Activated CD8-positive, alpha-beta T cell treated with anti-CD3 and anti-CD28 coated beads for 36 hours (primary cell): ENCODE measurements at regions of chr11 and their contacts with region 1.

Region 1: GRCh38 chr11:118198370-118198769 is 21.9 kb upstream of the SCN2B start:
- DNase-seq: peak; percentile 93
- ATAC-seq: peak; percentile 14
- H3K4me3 Mint-ChIP-seq: no peak overlapping the region
- H3K27ac Mint-ChIP-seq: no peak overlapping the region
- H3K4me1 Mint-ChIP-seq: peaks cover 40% of the 10 kb centered on the region
- H3K27me3 Mint-ChIP-seq: no peaks in the 10 kb centered on the region
- CTCF ChIP-seq: peak; percentile 92

Region 2: DNA sequence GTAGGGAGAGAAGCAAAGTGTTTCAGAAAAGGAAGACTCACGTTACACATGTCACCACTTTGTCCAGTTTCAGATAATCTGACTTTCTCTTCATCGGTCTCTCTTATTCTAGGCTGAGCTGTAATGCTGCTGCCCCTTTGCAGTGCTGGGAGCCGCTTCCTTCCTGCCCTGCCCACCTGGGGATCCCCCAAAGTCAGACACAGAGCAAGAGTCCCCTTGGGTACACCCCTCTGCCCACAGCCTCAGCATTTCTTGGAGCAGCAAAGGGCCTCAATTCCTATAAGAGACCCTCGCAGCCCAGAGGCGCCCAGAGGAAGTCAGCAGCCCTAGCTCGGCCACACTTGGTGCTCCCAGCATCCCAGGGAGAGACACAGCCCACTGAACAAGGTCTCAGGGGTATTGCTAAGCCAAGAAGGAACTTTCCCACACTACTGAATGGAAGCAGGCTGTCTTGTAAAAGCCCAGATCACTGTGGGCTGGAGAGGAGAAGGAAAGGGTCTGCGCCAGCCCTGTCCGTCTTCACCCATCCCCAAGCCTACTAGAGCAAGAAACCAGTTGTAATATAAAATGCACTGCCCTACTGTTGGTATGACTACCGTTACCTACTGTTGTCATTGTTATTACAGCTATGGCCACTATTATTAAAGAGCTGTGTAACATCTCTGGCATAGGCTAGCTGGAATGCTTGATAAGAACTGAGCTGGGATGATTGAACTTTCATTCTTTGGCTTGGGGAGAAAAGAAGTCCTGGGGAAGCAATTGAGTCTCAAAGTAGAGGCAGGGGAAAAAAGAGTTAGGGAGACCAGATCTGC is 80.4 kb before region 1 on chr11:
- CTCF ChIA-PET with region 1: no interaction called
- POLR2A ChIA-PET with region 1: no interaction called
- intact Hi-C with region 1: no loop called
- DNase-seq: peak; percentile 77
- ATAC-seq: peak; percentile 99
- H3K4me3 Mint-ChIP-seq: peak overlapping the region; percentile 58
- H3K27ac Mint-ChIP-seq: peak overlapping the region; percentile 77
- H3K4me1 Mint-ChIP-seq: peaks cover 34% of the 10 kb centered on the region
- H3K27me3 Mint-ChIP-seq: no peaks in the 10 kb centered on the region
- CTCF ChIP-seq: no peak

Region 3: DNA sequence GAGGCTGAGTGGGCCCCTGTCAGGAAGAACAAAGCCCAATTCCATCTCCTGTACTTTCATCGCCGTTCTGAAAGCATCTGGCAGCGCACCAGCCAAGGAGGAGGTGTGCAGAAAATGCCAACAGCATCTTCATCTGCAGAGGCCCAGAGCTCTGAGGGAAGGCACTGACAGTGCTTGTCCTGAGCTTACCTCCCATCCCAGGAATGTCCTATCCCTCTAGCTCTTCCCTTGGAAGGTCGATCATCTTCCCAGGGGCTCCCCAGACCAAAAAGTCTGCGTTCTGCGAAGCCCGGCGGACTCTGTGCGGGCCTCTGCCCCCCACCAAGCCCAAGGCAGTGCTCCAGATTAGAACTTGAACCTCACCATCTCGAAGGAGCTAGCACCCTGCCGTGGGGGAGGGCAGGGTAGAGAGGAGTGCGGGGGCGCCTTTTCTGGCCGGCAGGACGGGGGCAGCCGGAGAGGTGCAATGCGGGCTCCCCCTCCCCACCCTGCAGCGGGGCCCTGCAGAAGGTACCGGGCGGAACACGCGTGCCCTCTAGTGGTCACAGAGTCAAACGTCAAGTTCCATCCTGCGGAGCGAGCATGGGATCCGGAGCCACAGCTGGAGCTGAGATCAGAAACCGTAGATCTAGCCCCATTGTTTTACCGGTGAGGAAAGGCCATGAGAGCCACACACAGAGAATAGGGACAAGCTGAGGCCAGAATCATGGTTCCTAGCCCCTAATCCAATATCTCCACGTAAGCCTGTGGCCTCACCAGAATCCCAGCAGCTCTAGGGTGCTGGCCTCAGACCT is 26.9 kb before region 1 on chr11:
- CTCF ChIA-PET with region 1: interaction called, 17 read pairs
- POLR2A ChIA-PET with region 1: interaction called, 3 read pairs
- intact Hi-C with region 1: no loop called
- DNase-seq: peak; percentile 84
- ATAC-seq: peak; percentile 98
- H3K4me3 Mint-ChIP-seq: no peak overlapping the region
- H3K27ac Mint-ChIP-seq: no peak overlapping the region
- H3K4me1 Mint-ChIP-seq: peaks cover 2% of the 10 kb centered on the region
- H3K27me3 Mint-ChIP-seq: peaks cover 5% of the 10 kb centered on the region
- CTCF ChIP-seq: peak; percentile 94

Region 4: DNA sequence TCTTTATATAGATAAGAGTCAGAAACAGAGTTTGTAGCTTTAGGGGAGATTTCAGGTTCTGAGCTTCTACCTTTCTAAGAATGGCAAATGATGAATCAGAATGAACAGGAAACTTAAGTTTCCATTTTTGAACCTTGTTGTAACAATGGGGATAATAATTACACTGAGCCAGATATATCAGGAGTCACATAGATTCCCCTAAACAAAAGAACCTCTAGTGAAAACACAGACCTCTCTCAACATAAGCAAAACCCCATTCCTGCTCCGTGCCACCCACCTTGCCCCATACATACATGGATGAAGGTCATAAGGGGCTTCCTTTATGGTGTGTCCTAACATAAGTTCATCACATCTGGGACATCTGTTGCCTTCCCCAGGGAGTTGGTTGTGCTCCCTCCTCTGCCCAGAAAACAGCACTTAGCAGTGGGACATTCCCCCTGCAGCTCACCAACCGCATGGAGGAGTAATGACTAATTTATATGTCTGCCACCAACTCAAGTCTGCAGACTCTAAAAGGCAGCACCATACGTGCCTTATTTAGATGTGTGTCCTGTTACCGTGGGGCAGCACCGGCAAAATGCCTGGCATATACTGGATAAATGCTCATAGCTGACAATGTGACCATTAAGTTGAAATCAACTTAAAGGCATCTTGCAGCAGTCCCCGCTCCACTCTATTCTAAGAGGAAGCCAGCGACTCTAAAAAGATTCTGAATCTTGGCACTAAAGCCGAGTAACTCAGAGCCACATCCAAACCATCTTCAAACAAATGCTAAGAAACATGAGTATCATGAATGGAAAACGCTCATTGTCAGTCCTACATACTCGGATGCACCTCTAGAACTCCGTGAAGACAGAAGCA is 18.5 kb after region 1 on chr11:
- CTCF ChIA-PET with region 1: interaction called, 100 read pairs
- POLR2A ChIA-PET with region 1: interaction called, 326 read pairs
- intact Hi-C with region 1: loop called (anchors 1 kb)
- DNase-seq: peak; percentile 79
- ATAC-seq: peak; percentile 70
- H3K4me3 Mint-ChIP-seq: peak overlapping the region; percentile 96
- H3K27ac Mint-ChIP-seq: peak overlapping the region; percentile 100
- H3K4me1 Mint-ChIP-seq: peaks cover 84% of the 10 kb centered on the region
- H3K27me3 Mint-ChIP-seq: no peaks in the 10 kb centered on the region
- CTCF ChIP-seq: no peak

Region 5: GRCh38 chr11:118247047-118247446 is 48.7 kb after region 1 on chr11:
- CTCF ChIA-PET with region 1: interaction called, 24 read pairs
- POLR2A ChIA-PET with region 1: interaction called, 40 read pairs
- intact Hi-C with region 1: no loop called
- DNase-seq: no peak
- ATAC-seq: peak; percentile 47
- H3K4me3 Mint-ChIP-seq: no peak overlapping the region
- H3K27ac Mint-ChIP-seq: peak overlapping the region; percentile 97
- H3K4me1 Mint-ChIP-seq: peaks cover 72% of the 10 kb centered on the region
- H3K27me3 Mint-ChIP-seq: no peaks in the 10 kb centered on the region
- CTCF ChIP-seq: no peak

Region 6: GRCh38 chr11:118263695-118264567 is 65.6 kb after region 1 on chr11 and contains the start of gene MPZL2:
- CTCF ChIA-PET with region 1: interaction called, 17 read pairs
- POLR2A ChIA-PET with region 1: interaction called, 3 read pairs
- intact Hi-C with region 1: no loop called
- DNase-seq: peak; percentile 57
- ATAC-seq: peak; percentile 79
- H3K4me3 Mint-ChIP-seq: peak within 1 kb of the TSS; percentile 81
- H3K27ac Mint-ChIP-seq: peak within 1 kb of the TSS; percentile 77
- H3K4me1 Mint-ChIP-seq: peaks cover 56% of the 10 kb centered on the region
- H3K27me3 Mint-ChIP-seq: no peaks in the 10 kb centered on the region
- CTCF ChIP-seq: no peak
- total RNA-seq, gene MPZL2: 26.2 to 31.0 TPM

Region 7: DNA sequence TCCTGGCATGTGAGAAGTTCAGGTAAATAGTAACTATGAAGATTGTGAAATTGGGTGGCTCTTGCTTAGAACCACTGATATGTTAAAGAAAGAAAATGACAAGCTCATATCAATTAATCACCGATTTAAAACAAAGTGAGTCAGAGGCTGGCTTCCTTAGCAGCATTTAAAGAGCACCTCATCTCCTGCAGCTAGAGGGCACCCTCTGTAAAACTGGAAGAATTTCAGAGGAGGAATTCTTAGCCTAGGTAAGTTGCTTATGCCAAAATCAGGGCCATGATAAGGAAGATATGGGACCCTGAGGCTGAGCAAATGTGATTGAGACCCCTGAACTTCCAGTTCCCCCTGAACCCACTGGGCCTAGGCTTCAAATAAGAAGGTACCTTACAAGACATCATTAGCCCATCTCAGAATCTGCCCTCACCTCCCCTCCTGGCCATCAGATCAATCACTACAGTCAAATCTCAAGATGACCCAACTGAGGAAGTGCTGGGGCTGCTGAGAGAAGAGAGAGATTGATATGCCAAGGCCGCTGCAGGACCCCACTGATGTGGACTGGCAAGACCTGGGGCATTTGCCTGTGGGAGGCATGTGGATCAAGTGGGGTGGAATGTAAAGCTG is 97.6 kb after region 1 on chr11:
- CTCF ChIA-PET with region 1: interaction called, 53 read pairs
- POLR2A ChIA-PET with region 1: no interaction called
- intact Hi-C with region 1: loop called (anchors 5 kb)
- DNase-seq: peak; percentile 70
- ATAC-seq: peak; percentile 77
- H3K4me3 Mint-ChIP-seq: no peak overlapping the region
- H3K27ac Mint-ChIP-seq: peak overlapping the region; percentile 36
- H3K4me1 Mint-ChIP-seq: peaks cover 19% of the 10 kb centered on the region
- H3K27me3 Mint-ChIP-seq: no peaks in the 10 kb centered on the region
- CTCF ChIP-seq: peak; percentile 78

Region 8: DNA sequence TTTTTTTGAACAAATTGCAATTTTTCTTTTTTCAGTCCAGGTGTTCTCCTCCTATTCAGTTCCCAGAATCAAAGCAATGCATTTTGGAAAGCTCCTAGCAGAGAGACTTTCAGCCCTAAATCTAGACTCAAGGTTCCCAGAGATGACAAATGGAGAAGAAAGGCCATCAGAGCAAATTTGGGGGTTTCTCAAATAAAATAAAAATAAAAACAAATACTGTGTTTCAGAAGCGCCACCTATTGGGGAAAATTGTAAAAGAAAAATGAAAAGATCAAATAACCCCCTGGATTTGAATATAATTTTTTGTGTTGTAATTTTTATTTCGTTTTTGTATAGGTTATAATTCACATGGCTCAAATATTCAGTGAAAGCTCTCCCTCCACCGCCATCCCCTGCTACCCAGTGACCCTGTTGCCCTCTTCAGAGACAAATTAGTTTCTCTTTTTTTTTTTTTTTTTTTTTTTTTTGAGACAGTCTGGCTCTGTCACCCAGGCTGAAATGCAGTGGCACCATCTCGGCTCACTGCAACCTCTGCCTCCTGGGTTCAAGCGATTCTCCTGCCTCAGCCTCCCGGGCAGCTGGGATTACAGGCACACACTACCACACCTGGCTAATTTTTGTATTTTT is 154.8 kb after region 1 on chr11:
- CTCF ChIA-PET with region 1: interaction called, 24 read pairs
- POLR2A ChIA-PET with region 1: interaction called, 3 read pairs
- intact Hi-C with region 1: no loop called
- DNase-seq: no peak
- ATAC-seq: peak; percentile 21
- H3K4me3 Mint-ChIP-seq: no peak overlapping the region
- H3K27ac Mint-ChIP-seq: peak overlapping the region; percentile 86
- H3K4me1 Mint-ChIP-seq: peaks cover 33% of the 10 kb centered on the region
- H3K27me3 Mint-ChIP-seq: no peaks in the 10 kb centered on the region
- CTCF ChIP-seq: peak; percentile 83